ENCODE measurements at regions of chr11 and their contacts with region 1.

Region 1: GRCh38 chr11:47766305-47767227 is 575 bp downstream of the FNBP4 start:
- DNase-seq: peak; percentile 75
- H3K4me3 Mint-ChIP-seq: peak overlapping the region; percentile 99
- H3K27ac Mint-ChIP-seq: peak overlapping the region; percentile 100
- H3K4me1 Mint-ChIP-seq: peaks cover 28% of the 10 kb centered on the region
- H3K27me3 Mint-ChIP-seq: no peaks in the 10 kb centered on the region

Region 2: DNA sequence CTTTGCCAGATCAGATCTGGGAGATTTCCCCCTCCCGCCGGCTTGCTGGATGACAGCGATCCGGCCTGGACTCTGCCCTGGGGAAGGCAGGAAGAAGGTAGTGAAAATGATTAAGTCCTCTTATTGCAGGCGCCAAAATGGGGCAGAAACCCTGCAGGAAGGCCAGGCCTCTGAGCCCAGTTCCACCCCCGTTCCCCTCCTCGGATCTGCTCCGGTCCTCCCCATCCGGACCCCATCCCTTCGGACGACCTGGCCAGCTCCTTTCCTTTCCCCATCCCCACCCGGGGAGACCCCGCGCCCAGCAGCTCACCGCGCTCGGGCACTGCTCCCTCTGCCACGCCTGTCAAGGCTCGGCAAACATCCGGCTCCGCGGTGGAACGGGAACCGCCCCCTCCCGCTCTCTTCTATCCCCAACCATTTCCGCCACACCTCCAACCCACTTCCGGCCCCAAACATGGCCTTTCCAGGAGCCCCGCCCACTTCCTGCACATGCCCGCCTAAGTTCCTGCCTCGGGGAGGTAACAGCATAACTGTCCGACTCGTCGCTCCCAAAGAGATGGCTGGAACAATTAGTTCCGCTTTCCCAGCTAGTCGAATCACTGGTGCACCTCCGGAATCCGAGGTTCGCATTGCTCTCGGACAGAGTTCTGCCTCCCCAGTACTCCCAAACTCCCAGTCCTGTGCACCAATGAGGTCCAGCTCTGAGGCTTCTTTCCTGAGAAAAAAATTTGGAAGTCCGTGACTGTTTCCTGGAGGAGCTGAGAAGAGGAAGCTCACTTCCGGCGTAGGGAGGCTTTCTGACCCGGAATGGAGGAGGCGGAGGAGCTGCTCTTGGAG is 1066.1 kb before region 1 on chr11 and contains the starts of genes ARHGAP1 and ZNF408:
- intact Hi-C with region 1: loop called (anchors 2 kb)
- DNase-seq: peak; percentile 98
- H3K4me3 Mint-ChIP-seq: peak within 1 kb of the TSS; percentile 99
- H3K27ac Mint-ChIP-seq: peak within 1 kb of the TSS; percentile 95
- H3K4me1 Mint-ChIP-seq: peaks cover 48% of the 10 kb centered on the region
- H3K27me3 Mint-ChIP-seq: peaks cover 2% of the 10 kb centered on the region
- total RNA-seq, gene ARHGAP1: 69.8 and 71.7 TPM in 2 replicates
- total RNA-seq, gene ZNF408: 12.9 and 13.9 TPM in 2 replicates

Region 3: GRCh38 chr11:47373876-47374720 is 392.5 kb before region 1 on chr11:
- intact Hi-C with region 1: no loop called
- DNase-seq: peak; percentile 69
- H3K4me3 Mint-ChIP-seq: no peak overlapping the region
- H3K27ac Mint-ChIP-seq: no peak overlapping the region
- H3K4me1 Mint-ChIP-seq: peaks cover 9% of the 10 kb centered on the region
- H3K27me3 Mint-ChIP-seq: peaks cover 3% of the 10 kb centered on the region

Region 4: DNA sequence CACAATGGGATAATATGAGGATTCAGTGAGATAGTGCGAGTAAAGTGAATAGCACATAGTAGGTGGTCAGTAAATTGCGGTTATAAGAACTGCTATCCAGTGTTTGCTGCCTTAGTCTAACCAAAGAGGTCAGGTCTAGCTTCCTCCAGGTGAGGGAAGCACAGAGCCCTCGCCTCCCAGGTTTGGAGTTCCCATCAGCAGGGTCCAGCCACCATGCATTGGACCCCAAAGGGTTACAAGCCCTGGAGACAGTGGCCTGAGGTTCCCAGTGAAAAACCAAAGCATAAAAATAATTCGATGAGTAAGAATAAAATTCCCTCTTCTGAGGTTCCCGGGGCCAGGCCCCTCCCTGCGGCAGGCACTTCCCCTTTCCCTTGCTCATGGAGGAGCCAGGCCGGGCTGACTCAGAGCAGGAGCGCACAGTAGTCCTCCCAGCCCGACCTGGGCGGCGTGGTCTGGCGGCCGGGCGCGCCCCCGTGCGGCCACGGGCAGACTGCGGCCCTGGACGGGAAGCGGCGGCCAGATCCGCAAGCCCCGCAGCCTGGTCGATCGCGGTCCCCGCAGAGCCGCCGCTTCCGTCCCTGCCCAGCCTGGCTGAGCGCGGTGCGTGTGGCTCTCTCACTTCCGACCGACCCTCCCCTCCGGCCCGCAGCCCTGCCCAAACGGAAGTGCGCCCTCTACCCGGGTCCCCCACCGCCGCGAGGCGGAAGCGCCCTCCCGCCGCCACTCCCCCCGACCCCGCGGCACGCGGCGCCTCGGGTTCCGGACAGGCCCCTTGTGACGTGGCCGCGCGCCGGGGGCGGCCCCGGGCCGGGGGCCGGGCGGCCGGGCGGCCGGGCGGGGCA is 358.6 kb before region 1 on chr11 and contains the start of gene SLC39A13:
- intact Hi-C with region 1: loop called (anchors 5 kb)
- DNase-seq: peak; percentile 93
- H3K4me3 Mint-ChIP-seq: peak within 1 kb of the TSS; percentile 94
- H3K27ac Mint-ChIP-seq: peak within 1 kb of the TSS; percentile 92
- H3K4me1 Mint-ChIP-seq: peaks cover 21% of the 10 kb centered on the region
- H3K27me3 Mint-ChIP-seq: no peaks in the 10 kb centered on the region
- total RNA-seq, gene SLC39A13: 15.5 and 16.2 TPM in 2 replicates

Region 5: GRCh38 chr11:47578524-47579460 is 187.8 kb before region 1 on chr11 and contains the starts of genes KBTBD4 and NDUFS3:
- intact Hi-C with region 1: loop called (anchors 1 kb)
- DNase-seq: peak; percentile 89
- H3K4me3 Mint-ChIP-seq: peak within 1 kb of the TSS; percentile 96
- H3K27ac Mint-ChIP-seq: peak within 1 kb of the TSS; percentile 98
- H3K4me1 Mint-ChIP-seq: peaks cover 35% of the 10 kb centered on the region
- H3K27me3 Mint-ChIP-seq: no peaks in the 10 kb centered on the region
- total RNA-seq, gene KBTBD4: 16.3 and 19.0 TPM in 2 replicates
- total RNA-seq, gene NDUFS3: 148 and 152 TPM in 2 replicates

Region 6: GRCh38 chr11:47616726-47617416 is 149.7 kb before region 1 on chr11:
- intact Hi-C with region 1: no loop called
- DNase-seq: no peak
- H3K4me3 Mint-ChIP-seq: no peak overlapping the region
- H3K27ac Mint-ChIP-seq: no peak overlapping the region
- H3K4me1 Mint-ChIP-seq: peaks cover 11% of the 10 kb centered on the region
- H3K27me3 Mint-ChIP-seq: no peaks in the 10 kb centered on the region

Region 7: DNA sequence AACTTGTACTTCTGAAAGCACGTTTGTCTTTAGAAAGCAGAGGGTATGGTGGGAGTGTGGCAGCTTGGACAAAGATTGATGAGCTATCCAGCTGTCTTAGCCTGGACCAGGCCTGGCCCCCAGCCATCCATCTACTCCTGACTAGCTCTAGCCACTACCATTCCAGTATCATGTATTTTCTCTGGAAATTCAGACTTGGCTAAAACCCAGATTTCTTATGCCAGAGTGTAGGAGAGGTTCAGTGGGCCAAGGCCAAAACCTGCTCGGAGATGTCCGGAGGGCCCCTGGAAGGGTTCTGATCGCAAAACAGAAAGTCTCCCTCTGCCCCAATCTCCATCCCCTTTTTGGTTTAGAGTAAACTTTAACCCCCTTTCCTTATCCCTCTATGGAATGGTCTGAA is 99.4 kb before region 1 on chr11:
- intact Hi-C with region 1: no loop called
- DNase-seq: no peak
- H3K4me3 Mint-ChIP-seq: no peak overlapping the region
- H3K27ac Mint-ChIP-seq: no peak overlapping the region
- H3K4me1 Mint-ChIP-seq: peaks cover 6% of the 10 kb centered on the region
- H3K27me3 Mint-ChIP-seq: no peaks in the 10 kb centered on the region

Region 8: GRCh38 chr11:47688111-47688510 is 78.5 kb before region 1 on chr11:
- intact Hi-C with region 1: no loop called
- DNase-seq: no peak
- H3K4me3 Mint-ChIP-seq: no peak overlapping the region
- H3K27ac Mint-ChIP-seq: no peak overlapping the region
- H3K4me1 Mint-ChIP-seq: no peaks in the 10 kb centered on the region
- H3K27me3 Mint-ChIP-seq: no peaks in the 10 kb centered on the region

Region 9: DNA sequence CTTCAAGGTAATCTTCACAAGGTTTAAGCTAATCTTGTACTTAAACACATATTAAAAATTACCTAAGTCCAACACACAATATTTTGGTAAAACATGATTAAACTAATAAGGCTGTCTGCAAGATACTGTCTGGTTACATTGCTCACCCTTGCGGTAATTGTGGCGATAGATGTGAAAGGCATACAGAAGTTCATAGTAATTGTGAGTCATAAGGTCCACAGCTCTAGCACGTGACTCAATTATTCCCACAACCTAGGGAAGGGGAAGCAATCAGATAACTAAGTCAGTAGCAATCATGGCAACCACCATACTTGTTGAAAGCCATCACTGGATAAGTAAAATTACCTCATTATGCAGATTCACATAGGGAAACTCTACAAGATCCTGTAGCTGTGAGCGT is 31.1 kb after region 1 on chr11:
- intact Hi-C with region 1: loop called (anchors 1 kb)
- DNase-seq: peak; percentile 9
- H3K4me3 Mint-ChIP-seq: no peak overlapping the region
- H3K27ac Mint-ChIP-seq: peak overlapping the region; percentile 89
- H3K4me1 Mint-ChIP-seq: peaks cover 10% of the 10 kb centered on the region
- H3K27me3 Mint-ChIP-seq: no peaks in the 10 kb centered on the region

Region 10: GRCh38 chr11:48109046-48109666 is 342.6 kb after region 1 on chr11:
- intact Hi-C with region 1: loop called (anchors 1 kb)
- DNase-seq: no peak
- H3K4me3 Mint-ChIP-seq: peak overlapping the region; percentile 54
- H3K27ac Mint-ChIP-seq: peak overlapping the region; percentile 88
- H3K4me1 Mint-ChIP-seq: peaks cover 68% of the 10 kb centered on the region
- H3K27me3 Mint-ChIP-seq: no peaks in the 10 kb centered on the region